BJ (cell line): ENCODE measurements at regions of chr15 and their contacts with region 1.

Region 1: GRCh38 chr15:77024271-77025082 is 29.6 kb downstream of the PSTPIP1 start:
- DNase-seq: no peak
- H3K4me3 ChIP-seq: no peak overlapping the region
- H3K27me3 ChIP-seq: no peaks in the 10 kb centered on the region
- CTCF ChIP-seq: peak; percentile 96

Region 2: DNA sequence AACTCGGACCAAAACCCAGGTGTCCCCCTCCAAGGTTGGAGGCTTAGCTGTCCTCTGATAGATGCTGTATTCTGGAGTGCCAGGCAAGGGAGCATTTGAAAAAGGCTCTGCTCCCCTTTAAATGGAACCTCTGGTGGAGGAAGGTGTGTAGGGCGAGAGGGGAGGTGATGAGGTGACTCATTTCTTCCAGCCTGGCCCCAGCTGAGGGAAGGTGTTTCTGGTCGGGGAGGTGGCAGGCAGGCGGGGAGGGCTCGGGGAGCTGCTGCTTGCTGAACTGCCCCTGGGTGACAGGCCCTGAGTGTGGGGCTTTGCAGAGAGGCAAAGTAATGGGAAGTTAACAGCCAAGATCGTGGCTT is 10.7 kb before region 1 on chr15:
- CTCF ChIA-PET with region 1: interaction called, 10 read pairs
- POLR2A ChIA-PET with region 1: no interaction called
- DNase-seq: no peak
- H3K4me3 ChIP-seq: no peak overlapping the region
- H3K27me3 ChIP-seq: peaks cover 2% of the 10 kb centered on the region
- CTCF ChIP-seq: no peak

Region 3: DNA sequence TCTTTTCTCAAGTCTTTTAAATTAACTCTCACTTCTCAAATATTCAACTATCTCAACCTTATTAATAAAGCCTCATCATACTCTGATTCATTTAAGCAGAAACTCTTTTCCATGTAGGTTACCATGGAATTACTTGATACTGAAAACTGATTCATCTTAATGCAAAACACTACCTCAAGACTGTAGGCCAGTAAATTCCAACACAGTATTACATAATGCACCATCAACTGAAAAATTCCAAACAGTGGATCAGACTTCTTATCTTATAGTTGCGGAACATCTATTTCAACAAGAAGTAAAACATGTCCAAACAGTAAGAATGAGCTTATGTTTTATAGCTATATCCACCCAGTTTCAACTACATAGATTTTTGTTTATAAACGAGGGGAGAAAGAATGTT is 271.0 kb after region 1 on chr15:
- CTCF ChIA-PET with region 1: no interaction called
- POLR2A ChIA-PET with region 1: no interaction called
- DNase-seq: peak; percentile 20
- H3K4me3 ChIP-seq: no peak overlapping the region
- H3K27me3 ChIP-seq: no peaks in the 10 kb centered on the region
- CTCF ChIP-seq: no peak